ENCODE measurements at regions of chr5 and their contacts with region 1.

Region 1: GRCh38 chr5:57173185-57174127 is at the start of gene GPBP1:
- ATAC-seq: peak; percentile 80 to 90 (median 86)
- H3K4me3 ChIP-seq: peak within 1 kb of the TSS; percentile 89 to 98 (median 96)
- H3K27ac ChIP-seq: peak within 1 kb of the TSS; percentile 96 to 98
- H3K4me1 ChIP-seq: peaks cover 0 to 5% of the 10 kb centered on the region in 2 donors
- total RNA-seq, gene GPBP1: 51.5 to 102 (median 90.8) TPM

Region 2: DNA sequence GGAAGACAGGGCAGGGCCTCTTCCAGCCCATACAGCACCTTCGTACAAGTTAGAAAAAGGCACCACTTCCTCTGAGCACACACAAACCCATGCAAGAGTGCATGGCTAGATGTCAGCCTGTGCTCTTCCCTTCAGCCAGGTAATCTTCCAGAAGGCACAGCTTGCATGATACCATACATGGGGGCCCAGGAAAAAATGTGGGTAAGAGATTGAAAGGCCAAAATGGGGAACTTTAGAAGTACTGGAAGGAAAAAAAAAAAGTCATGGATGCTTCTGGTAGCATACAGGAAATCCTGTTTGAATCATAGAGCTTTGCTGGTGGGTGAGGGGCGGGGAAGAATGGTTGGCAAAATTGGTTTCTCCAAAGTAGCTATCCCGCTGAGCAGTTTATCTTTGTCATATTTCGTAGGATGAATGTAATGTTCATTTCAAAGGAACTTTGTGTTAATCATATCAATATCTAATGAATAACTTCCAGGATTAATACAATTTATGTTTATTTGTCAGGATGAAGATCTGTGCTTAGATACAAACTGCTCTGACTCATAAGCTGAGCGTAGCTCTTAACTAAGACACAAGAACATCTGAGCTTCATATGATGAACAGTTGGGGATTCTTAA is 436.3 kb before region 1 on chr5:
- in situ Hi-C with region 1: no loop called
- ATAC-seq: no peak
- H3K4me3 ChIP-seq: no peak overlapping the region
- H3K27ac ChIP-seq: no peak overlapping the region
- H3K4me1 ChIP-seq: peaks cover 0 to 10% of the 10 kb centered on the region in 2 donors

Region 3: GRCh38 chr5:56951946-56952691 is 221.3 kb before region 1 on chr5 and contains the start of gene MIER3:
- in situ Hi-C with region 1: loop called in 1 of 9 experiments (anchors 25 kb)
- ATAC-seq: peak; percentile 87 to 93 (median 91)
- H3K4me3 ChIP-seq: peak within 1 kb of the TSS; percentile 79 to 97 (median 90)
- H3K27ac ChIP-seq: peak within 1 kb of the TSS; percentile 94 to 99
- H3K4me1 ChIP-seq: peaks cover 10 to 12% of the 10 kb centered on the region in 2 donors
- total RNA-seq, gene MIER3: 17.3 to 24.5 (median 22.0) TPM

Measured in motor neuron (in vitro differentiated cells).